Activated T-helper 1 cell treated with anti-CD3 and anti-CD28 coated beads, Interleukin-12 subunit alpha, Interleukin-12 subunit beta, Interleukin-2, Interleukin-4 antibody, amounts not matched to agents 30 ng/mL and 10 ng/mL and 1 ng/mL, durations not matched to agents 14 hours and 24 hours and 36 hours (primary cell): ENCODE measurements at regions of chr3 and their contacts with region 1.

Region 1: DNA sequence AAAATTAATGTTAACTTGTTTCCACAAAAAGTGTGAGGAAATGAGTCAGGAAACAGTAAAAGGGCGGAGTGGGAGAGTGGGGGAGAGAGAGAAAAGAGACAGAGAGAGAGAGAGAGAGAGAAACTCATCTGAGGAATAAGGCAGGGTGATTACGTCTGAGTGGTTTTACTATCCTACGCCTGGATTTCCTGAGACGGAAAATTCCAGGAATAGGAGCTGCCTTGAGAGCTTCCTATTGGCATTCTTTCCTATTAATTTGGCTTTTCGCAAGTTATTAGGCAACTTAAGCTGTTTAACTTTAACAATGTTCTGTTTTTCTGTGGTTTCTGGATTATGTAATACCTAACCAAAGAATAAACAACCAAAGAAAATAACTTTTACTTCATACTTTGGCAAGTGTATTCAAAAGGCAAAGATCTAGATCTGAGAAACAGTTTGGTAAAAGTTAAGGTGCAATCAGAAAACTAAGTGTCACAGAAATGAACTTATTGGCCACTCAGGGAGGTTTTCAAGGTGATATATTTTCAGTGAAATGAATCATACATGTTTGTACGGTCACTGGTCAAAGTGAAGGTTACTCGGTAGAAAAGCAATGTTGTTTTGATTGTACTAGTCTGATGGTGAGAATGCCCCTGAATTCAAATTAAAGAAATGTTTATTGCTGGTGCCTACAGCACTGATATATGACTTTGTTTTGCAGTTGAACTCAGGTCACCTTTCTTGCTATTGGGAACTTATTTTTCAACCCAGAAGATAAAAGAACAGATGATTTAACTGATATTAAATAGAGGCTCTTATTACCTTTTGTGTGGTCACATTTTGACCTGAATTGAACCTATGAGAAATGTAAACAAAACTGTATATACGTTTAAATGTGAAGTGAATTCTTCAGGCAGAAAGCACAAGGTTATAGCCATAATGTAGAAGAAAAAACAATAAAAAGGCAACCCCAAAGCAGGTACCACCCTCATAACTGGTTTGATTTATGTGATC is 39.9 kb upstream of the TNFSF10 start:
- DNase-seq: peak; percentile 19
- H3K4me3 Mint-ChIP-seq: peak overlapping the region; percentile 74
- H3K27ac Mint-ChIP-seq: peak overlapping the region; percentile 94
- H3K4me1 Mint-ChIP-seq: peaks cover 65% of the 10 kb centered on the region
- H3K27me3 Mint-ChIP-seq: no peaks in the 10 kb centered on the region

Region 2: GRCh38 chr3:172410702-172411477 is 152.3 kb before region 1 on chr3:
- intact Hi-C with region 1: no loop called
- DNase-seq: no peak
- H3K4me3 Mint-ChIP-seq: no peak overlapping the region
- H3K27ac Mint-ChIP-seq: no peak overlapping the region
- H3K4me1 Mint-ChIP-seq: no peaks in the 10 kb centered on the region
- H3K27me3 Mint-ChIP-seq: peaks cover 12% of the 10 kb centered on the region

Region 3: GRCh38 chr3:172517859-172518466 is 45.2 kb before region 1 on chr3:
- intact Hi-C with region 1: loop called (anchors 1 kb)
- DNase-seq: peak; percentile 57
- H3K4me3 Mint-ChIP-seq: peak overlapping the region; percentile 88
- H3K27ac Mint-ChIP-seq: peak overlapping the region; percentile 97
- H3K4me1 Mint-ChIP-seq: peaks cover 80% of the 10 kb centered on the region
- H3K27me3 Mint-ChIP-seq: no peaks in the 10 kb centered on the region

Region 4: DNA sequence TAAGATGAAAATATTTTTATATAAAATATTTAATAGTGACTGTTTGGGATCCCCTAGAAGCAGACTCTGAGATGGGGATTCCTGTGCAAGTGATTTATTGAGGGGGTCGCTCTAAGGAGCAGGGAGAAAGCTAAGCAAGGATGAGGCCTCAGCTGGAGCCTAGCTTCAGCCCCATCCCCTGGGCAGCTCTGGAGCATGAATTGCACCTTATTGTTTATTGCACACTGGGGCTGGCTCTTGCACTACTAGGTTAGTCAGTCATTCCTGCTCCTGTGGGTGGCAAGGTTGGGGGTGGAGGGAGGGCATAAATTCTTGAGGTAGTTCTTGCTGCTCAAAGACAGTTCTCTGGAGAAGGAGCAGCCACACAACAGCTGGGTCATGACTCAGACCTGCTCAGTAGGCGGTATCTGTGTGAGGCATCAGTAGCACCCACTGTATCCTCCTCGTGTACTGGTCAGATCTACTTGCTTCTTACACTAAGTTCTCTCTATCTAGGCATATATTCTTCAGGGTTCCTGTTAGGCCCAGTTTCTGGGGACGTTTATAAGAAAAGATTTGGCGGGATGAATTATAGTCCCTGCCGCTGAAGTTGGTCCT is 12.7 kb before region 1 on chr3:
- intact Hi-C with region 1: loop called (anchors 1 kb)
- DNase-seq: peak; percentile 61
- H3K4me3 Mint-ChIP-seq: peak overlapping the region; percentile 45
- H3K27ac Mint-ChIP-seq: peak overlapping the region; percentile 84
- H3K4me1 Mint-ChIP-seq: peaks cover 76% of the 10 kb centered on the region
- H3K27me3 Mint-ChIP-seq: no peaks in the 10 kb centered on the region

Region 5: GRCh38 chr3:172580680-172581401 is 17.7 kb after region 1 on chr3:
- intact Hi-C with region 1: loop called (anchors 1 kb)
- DNase-seq: no peak
- H3K4me3 Mint-ChIP-seq: peak overlapping the region; percentile 79
- H3K27ac Mint-ChIP-seq: peak overlapping the region; percentile 88
- H3K4me1 Mint-ChIP-seq: peaks cover 97% of the 10 kb centered on the region
- H3K27me3 Mint-ChIP-seq: no peaks in the 10 kb centered on the region